Right ventricle myocardium inferior (tissue), 1 donor: ENCODE measurements at regions of chr17 and their contacts with region 1.

Region 1: GRCh38 chr17:51572115-51572514 is 311.8 kb downstream of the UTP18 start:
- DNase-seq: no peak
- ATAC-seq: no peak

Region 2: GRCh38 chr17:51527194-51527982 is 44.7 kb before region 1 on chr17:
- intact Hi-C with region 1: loop called (anchors 10 kb)
- DNase-seq: no peak
- ATAC-seq: no peak

Region 3: GRCh38 chr17:51884783-51885182 is 312.7 kb after region 1 on chr17:
- intact Hi-C with region 1: no loop called
- DNase-seq: no peak
- ATAC-seq: no peak